Heart left ventricle (tissue), 16 donors: ENCODE measurements at regions of chr15 and their contacts with region 1.

Region 1: DNA sequence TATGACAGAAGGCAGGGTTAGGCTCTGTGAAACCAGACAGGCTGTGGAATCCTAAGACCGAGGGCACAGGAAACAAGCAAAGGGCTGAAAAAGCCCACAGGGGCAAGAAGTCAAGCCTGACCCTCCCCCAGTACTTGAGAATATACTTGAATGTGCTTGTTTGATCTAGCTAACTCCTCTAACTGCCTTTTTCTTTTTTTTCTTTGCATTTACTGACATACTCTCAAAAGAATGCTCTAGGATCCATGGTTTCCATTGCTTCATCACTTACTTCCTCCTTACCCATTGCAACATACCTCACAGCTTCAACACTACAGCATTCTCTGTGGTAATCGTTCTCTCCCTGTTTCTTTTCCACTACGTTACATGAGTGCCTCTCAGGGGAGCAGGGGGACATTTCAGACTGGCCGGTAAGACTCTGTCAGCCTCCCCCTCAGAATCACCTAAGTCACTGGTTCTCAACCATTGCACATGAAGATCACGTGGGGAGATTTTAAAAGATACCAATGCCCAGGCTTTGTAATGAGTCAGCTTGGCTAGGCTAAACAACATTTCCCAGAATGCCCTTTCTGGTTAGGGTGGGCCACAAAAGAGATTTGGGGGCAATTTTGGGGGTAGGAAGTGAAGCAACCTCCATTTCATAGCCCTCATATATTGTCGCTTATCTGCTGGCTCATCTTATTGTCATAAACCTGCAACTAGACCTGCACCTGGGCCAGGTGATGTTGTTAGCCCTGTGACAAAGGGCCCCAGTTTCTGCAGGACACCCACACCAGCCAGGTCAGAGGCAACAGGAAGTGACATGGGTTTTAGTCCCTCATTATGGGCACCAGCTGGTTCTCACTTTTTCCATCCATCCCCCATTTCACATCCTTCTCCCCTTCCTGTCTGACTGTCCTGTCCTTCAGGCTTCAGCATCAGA is 24.6 kb upstream of the RSL24D1 start:
- DNase-seq: no peak
- ATAC-seq: peak; percentile 21 to 88 (median 67)
- H3K4me3 ChIP-seq: peak overlapping the region in 1 of 12 donors; percentile 10
- H3K27ac ChIP-seq: peak overlapping the region in 2 of 12 donors; percentile 13 to 87
- H3K4me1 ChIP-seq: peaks cover 0 to 76% (median 0%) of the 10 kb centered on the region in 12 donors
- H3K27me3 ChIP-seq: no peaks in the 10 kb centered on the region
- CTCF ChIP-seq: no peak
- POLR2A ChIP-seq: no peak

Region 2: GRCh38 chr15:54620916-54621315 is 600.4 kb before region 1 on chr15:
- intact Hi-C with region 1: no loop called
- DNase-seq: no peak
- ATAC-seq: no peak
- H3K4me3 ChIP-seq: no peak overlapping the region
- H3K27ac ChIP-seq: no peak overlapping the region
- H3K4me1 ChIP-seq: no peaks in the 10 kb centered on the region
- H3K27me3 ChIP-seq: no peaks in the 10 kb centered on the region
- CTCF ChIP-seq: no peak
- POLR2A ChIP-seq: no peak

Region 3: GRCh38 chr15:55126111-55126510 is 95.2 kb before region 1 on chr15:
- intact Hi-C with region 1: no loop called
- DNase-seq: no peak
- ATAC-seq: no peak
- H3K4me3 ChIP-seq: no peak overlapping the region
- H3K27ac ChIP-seq: no peak overlapping the region
- H3K4me1 ChIP-seq: peaks cover 0 to 4% (median 0%) of the 10 kb centered on the region in 12 donors
- H3K27me3 ChIP-seq: peaks cover 0 to 4% (median 0%) of the 10 kb centered on the region in 9 donors
- CTCF ChIP-seq: no peak
- POLR2A ChIP-seq: no peak

Region 4: GRCh38 chr15:55279746-55280351 is 58.5 kb after region 1 on chr15:
- intact Hi-C with region 1: loop called in 2 of 10 experiments (anchors 5 kb)
- DNase-seq: no peak
- ATAC-seq: peak in 1 of 4 donors; percentile 34
- H3K4me3 ChIP-seq: peak overlapping the region in 1 of 12 donors; percentile 2
- H3K27ac ChIP-seq: peak overlapping the region in 1 of 12 donors; percentile 66
- H3K4me1 ChIP-seq: peaks cover 0 to 95% (median 0%) of the 10 kb centered on the region in 12 donors
- H3K27me3 ChIP-seq: no peaks in the 10 kb centered on the region
- CTCF ChIP-seq: no peak
- POLR2A ChIP-seq: no peak

Region 5: GRCh38 chr15:55290528-55291057 is 69.2 kb after region 1 on chr15:
- intact Hi-C with region 1: loop called (anchors 1 to 5 kb)
- DNase-seq: peak; percentile 80 to 92 (median 82)
- ATAC-seq: peak; percentile 86 to 95 (median 94)
- H3K4me3 ChIP-seq: peak overlapping the region; percentile 73 to 94 (median 84)
- H3K27ac ChIP-seq: peak overlapping the region; percentile 72 to 96 (median 87)
- H3K4me1 ChIP-seq: peaks cover 0 to 31% (median 3%) of the 10 kb centered on the region in 12 donors
- H3K27me3 ChIP-seq: no peaks in the 10 kb centered on the region
- CTCF ChIP-seq: peak; percentile 73 to 96 (median 89)
- POLR2A ChIP-seq: no peak

Region 6: DNA sequence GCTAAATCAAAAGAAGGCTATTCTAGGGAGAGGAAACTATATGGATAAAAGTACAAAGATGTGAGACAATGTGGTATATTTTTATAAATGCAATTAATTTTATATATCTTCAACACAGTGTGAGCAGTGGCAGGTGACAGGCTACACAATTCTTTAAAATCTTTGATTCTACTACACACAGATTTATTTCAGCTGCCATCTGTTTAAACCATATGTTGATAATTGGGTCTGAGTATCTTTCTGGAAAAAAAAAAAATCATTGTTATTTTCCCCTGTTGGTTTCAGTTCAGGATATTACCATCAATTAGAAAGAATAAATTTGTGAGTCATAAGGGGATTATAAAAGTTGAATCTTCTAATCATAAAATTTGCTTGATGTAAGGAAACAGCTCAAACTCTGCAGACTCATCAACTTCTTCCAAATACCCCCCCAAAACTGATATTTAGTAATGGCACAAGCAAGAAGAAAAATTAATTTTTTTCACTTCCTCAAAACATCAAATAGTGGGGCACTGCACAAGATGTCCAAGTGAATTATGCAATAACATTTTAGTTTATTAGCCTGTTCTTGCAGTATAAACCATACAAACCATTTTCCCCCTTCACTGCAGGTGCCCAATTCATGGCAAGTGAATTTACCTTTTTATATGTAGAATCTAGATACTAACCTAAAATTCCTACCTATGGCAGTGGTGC is 199.0 kb after region 1 on chr15:
- intact Hi-C with region 1: loop called in 1 of 10 experiments (anchors 5 kb)
- DNase-seq: no peak
- ATAC-seq: no peak
- H3K4me3 ChIP-seq: no peak overlapping the region
- H3K27ac ChIP-seq: no peak overlapping the region
- H3K4me1 ChIP-seq: no peaks in the 10 kb centered on the region
- H3K27me3 ChIP-seq: no peaks in the 10 kb centered on the region
- CTCF ChIP-seq: no peak
- POLR2A ChIP-seq: no peak

Region 7: GRCh38 chr15:55434989-55435825 is 213.9 kb after region 1 on chr15:
- intact Hi-C with region 1: loop called (anchors 2 to 10 kb)
- DNase-seq: no peak
- ATAC-seq: peak in 3 of 4 donors; percentile 46 to 74 (median 59)
- H3K4me3 ChIP-seq: no peak overlapping the region
- H3K27ac ChIP-seq: no peak overlapping the region
- H3K4me1 ChIP-seq: no peaks in the 10 kb centered on the region
- H3K27me3 ChIP-seq: no peaks in the 10 kb centered on the region
- CTCF ChIP-seq: peak in 11 of 12 donors; percentile 20 to 59 (median 44)
- POLR2A ChIP-seq: no peak